ENCODE measurements at regions of chr1 and their contacts with region 1.

Region 1: DNA sequence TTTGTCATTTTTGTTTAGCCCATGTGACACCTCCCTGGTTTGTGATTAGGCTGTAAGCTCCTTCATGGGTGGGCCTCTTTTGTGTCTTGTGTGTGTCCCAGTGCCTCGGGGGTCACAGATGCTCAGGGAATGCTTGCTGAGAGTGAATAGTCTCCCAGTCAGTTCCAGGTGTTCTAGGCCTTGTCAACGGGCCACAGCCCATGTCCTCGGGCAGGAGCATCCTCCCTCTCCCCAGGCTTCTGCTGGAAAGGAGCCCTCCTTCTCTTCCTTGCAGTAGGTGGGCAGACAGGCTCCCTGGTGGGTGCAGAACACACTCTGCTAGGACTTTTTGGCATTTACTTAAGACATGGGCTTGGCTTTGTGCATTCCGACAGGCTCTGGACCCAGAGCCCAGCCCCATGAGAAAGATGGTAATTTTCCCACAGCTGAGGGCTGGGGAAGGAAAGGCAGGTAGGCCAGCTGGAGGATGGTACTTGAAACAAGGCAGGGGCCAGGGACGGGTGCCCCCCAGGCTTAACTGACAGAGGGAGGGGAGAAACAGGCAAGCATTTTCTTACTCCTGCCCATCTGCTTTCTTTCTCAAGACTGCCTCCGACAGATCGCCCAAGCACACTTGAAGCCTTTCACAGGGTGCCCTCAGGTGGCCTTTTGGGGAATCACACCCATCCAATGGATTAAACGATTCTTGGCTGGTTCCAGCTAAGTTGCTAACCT is 7.1 kb upstream of the CPLANE2 start:
- DNase-seq: peak; percentile 64 to 80 (median 74)
- ATAC-seq: peak in 3 of 4 donors; percentile 34 to 43 (median 37)
- H3K4me3 ChIP-seq: no peak overlapping the region
- H3K27ac ChIP-seq: peak overlapping the region in 4 of 12 donors; percentile 17 to 48 (median 26)
- H3K4me1 ChIP-seq: peaks cover 5 to 39% (median 26%) of the 10 kb centered on the region in 12 donors
- H3K27me3 ChIP-seq: no peaks in the 10 kb centered on the region
- CTCF ChIP-seq: peak; percentile 74 to 86 (median 80)
- POLR2A ChIP-seq: no peak

Region 2: DNA sequence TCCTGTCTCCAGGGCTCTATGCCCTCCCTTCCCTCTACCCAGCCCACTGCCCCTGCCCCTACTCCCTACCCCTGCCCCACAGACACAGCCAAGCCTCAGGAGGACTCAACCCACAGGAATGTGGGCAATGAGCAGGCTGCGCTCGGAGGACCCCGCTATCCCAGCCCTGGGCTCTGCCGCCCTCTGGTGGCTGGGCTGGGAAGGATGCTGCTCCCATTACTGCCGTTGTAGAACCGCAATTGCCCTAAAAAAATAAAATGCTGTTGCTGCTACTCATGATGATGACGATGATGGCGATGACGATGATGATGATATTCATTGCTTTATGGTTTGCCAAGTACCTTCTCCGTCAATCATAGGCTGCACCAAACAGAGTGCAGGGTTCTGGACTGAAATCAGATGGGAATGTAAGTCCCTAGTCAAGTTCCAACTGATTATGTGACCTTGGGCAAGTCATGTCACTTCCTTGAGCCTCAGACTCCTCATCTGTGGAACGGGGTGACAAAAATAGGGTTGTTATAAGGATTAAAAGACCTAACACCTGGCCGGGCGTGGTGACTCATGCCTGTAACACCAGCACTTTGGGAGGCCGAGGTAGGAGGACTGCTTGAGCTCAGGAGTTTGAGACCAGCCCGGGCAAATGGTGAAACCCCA is 56.2 kb before region 1 on chr1:
- intact Hi-C with region 1: loop called in 2 of 10 experiments (anchors 5 kb)
- DNase-seq: peak; percentile 71 to 88 (median 73)
- ATAC-seq: peak; percentile 57 to 85 (median 77)
- H3K4me3 ChIP-seq: no peak overlapping the region
- H3K27ac ChIP-seq: no peak overlapping the region
- H3K4me1 ChIP-seq: peaks cover 0 to 20% (median 4%) of the 10 kb centered on the region in 12 donors
- H3K27me3 ChIP-seq: no peaks in the 10 kb centered on the region
- CTCF ChIP-seq: peak; percentile 94 to 99 (median 97)
- POLR2A ChIP-seq: no peak

Region 3: GRCh38 chr1:16206547-16207317 is 37.4 kb before region 1 on chr1:
- intact Hi-C with region 1: loop called in 9 of 10 experiments (anchors 5 kb)
- DNase-seq: peak; percentile 97 to 99 (median 98)
- ATAC-seq: peak; percentile 93 to 97 (median 96)
- H3K4me3 ChIP-seq: peak overlapping the region; percentile 30 to 67 (median 63)
- H3K27ac ChIP-seq: peak overlapping the region; percentile 64 to 98 (median 93)
- H3K4me1 ChIP-seq: peaks cover 0 to 23% (median 13%) of the 10 kb centered on the region in 12 donors
- H3K27me3 ChIP-seq: no peaks in the 10 kb centered on the region
- CTCF ChIP-seq: no peak
- POLR2A ChIP-seq: peak in 1 of 2 donors; percentile 64

Measured in heart left ventricle (tissue), 16 donors.